ENCODE measurements at regions of chr9 and their contacts with region 1.

Region 1: GRCh38 chr9:22855980-22856379 is 409.4 kb downstream of the DMRTA1 start:
- DNase-seq: no peak
- H3K4me3 ChIP-seq: no peak overlapping the region
- H3K27ac ChIP-seq: no peak overlapping the region
- H3K4me1 ChIP-seq: no peaks in the 10 kb centered on the region
- H3K27me3 ChIP-seq: no peaks in the 10 kb centered on the region
- CTCF ChIP-seq: no peak
- POLR2A ChIP-seq: no peak

Region 2: DNA sequence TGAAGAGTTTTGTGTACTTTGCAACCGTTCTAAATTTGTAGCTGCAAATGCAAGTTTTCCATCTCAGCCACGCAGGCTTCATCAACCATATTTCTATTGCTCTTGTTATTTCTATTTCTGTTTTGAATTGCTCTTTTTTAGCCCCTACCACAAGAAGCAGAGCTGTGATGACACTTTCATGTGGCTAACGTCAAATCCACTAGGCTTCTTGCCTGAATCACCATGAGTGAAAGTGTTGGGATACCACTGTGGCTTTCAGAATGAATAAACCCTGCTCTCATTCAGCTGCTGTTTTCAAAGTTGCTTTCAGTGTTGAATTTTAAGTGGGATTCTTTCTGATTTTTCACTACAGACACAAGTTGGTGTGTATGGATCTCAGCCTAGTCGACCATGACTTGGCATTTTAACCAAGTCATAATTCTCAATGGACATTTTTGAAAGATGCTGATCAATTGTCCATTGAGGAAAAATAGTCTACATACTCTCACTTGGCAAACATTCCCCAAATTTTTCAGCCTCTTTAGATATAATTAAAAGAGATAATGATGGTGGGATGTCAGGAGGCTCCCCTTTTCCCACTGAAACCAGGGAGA is 1094.6 kb before region 1 on chr9:
- CTCF ChIA-PET with region 1: no interaction called
- POLR2A ChIA-PET with region 1: no interaction called
- dilution Hi-C with region 1: no loop called
- intact Hi-C with region 1: no loop called
- DNase-seq: no peak
- H3K4me3 ChIP-seq: no peak overlapping the region
- H3K27ac ChIP-seq: no peak overlapping the region
- H3K4me1 ChIP-seq: no peaks in the 10 kb centered on the region
- H3K27me3 ChIP-seq: peaks cover 3 to 21% of the 10 kb centered on the region in 2 experiments
- CTCF ChIP-seq: no peak
- POLR2A ChIP-seq: no peak

Region 3: GRCh38 chr9:22913518-22913917 is 57.5 kb after region 1 on chr9:
- CTCF ChIA-PET with region 1: no interaction called
- POLR2A ChIA-PET with region 1: no interaction called
- dilution Hi-C with region 1: no loop called
- intact Hi-C with region 1: loop called (anchors 10 kb)
- DNase-seq: no peak
- H3K4me3 ChIP-seq: no peak overlapping the region
- H3K27ac ChIP-seq: no peak overlapping the region
- H3K4me1 ChIP-seq: no peaks in the 10 kb centered on the region
- H3K27me3 ChIP-seq: no peaks in the 10 kb centered on the region
- CTCF ChIP-seq: no peak
- POLR2A ChIP-seq: no peak